IMR-90 (cell line): ENCODE measurements at regions of chr7 and their contacts with region 1.

Region 1: DNA sequence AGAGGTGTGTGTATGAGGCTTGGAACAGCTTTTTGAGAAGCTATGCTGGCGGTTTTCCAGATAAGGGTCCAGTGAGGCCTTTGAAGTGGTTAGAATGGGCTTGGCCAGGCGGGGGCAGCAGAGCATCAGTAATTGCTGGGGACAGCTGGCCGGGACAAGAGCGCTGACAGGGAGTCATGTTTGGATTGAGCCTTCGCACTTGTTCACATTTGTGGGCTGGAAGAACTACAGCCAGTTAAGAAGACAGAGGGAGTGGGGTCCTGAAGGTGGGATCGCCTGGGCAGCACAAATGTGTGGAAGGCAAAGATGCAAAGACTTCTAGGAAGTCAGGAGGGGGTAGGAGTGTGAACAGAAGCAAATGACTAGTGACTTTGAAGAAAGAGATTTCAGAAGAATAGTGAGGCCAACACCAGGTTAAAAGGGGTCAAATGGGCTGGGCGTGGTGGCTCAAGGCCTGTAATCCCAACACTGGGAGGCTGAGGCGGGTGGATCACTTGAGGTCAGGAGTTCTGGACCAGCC is 12.7 kb upstream of the SDHAF3 start:
- DNase-seq: peak; percentile 60
- ATAC-seq: peak; percentile 100
- H3K4me3 ChIP-seq: no peak overlapping the region
- H3K27ac ChIP-seq: no peak overlapping the region
- H3K4me1 ChIP-seq: no peaks in the 10 kb centered on the region
- H3K27me3 ChIP-seq: no peaks in the 10 kb centered on the region
- CTCF ChIP-seq: peak; percentile 85
- POLR2A ChIP-seq: no peak
- RAD21 ChIP-seq: peak; percentile 89

Region 2: DNA sequence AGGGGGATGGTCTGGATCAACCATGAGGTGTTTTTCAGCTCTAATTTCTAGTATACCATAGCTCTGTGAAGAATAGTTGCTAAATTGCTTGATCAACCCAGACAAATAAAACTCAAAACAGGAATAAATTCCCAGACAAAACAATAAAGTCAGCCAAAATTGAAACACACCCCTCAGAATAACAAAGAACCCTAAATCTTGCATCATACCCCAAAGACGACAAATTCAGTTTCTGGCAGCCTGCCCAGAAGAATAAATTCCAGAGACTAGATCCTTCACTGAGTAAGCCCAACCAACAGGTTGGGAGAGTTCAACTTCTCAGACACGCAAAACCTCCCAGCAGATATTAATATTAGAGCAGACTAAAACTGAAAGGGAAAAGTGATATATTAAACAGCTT is 383.9 kb before region 1 on chr7:
- CTCF ChIA-PET with region 1: no interaction called
- POLR2A ChIA-PET with region 1: no interaction called
- dilution Hi-C with region 1: no loop called
- in situ Hi-C with region 1: no loop called
- intact Hi-C with region 1: no loop called
- DNase-seq: no peak
- ATAC-seq: no peak
- H3K4me3 ChIP-seq: no peak overlapping the region
- H3K27ac ChIP-seq: no peak overlapping the region
- H3K4me1 ChIP-seq: no peaks in the 10 kb centered on the region
- H3K27me3 ChIP-seq: no peaks in the 10 kb centered on the region
- CTCF ChIP-seq: no peak
- POLR2A ChIP-seq: no peak
- RAD21 ChIP-seq: no peak

Region 3: DNA sequence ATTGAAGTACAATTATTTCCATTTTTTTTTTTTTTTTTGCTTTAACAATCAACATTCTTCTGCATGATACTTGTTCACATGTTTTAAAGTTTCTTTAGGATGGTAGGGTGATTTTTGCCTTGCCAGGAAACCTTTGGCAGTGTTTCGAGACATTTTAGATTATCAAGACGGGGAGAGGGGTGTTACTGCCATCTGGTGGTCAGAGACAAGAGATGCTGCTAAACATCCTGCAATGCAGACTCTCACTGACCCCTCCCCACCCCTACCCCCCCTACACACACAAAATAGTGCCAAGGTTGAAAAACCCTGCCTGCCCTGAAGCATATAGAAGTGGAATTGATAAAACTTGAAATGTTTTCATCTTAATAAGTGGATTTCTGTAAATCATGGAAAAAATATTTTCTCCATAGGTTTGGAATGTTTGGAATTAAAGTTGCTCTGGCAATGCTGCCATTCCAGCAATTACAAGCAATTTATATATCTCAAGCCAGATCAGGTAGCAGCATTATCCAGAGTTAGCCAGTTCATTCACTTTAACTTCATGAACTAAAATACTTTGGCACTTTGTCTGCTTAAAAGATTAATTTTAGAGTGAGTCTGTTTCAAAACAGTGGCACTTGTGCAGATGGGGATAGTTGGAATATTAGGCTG is 74.8 kb after region 1 on chr7:
- CTCF ChIA-PET with region 1: interaction called, 4 read pairs
- POLR2A ChIA-PET with region 1: no interaction called
- dilution Hi-C with region 1: no loop called
- in situ Hi-C with region 1: no loop called
- intact Hi-C with region 1: loop called (anchors 1 kb)
- DNase-seq: peak; percentile 65
- ATAC-seq: peak; percentile 89
- H3K4me3 ChIP-seq: no peak overlapping the region
- H3K27ac ChIP-seq: no peak overlapping the region
- H3K4me1 ChIP-seq: no peaks in the 10 kb centered on the region
- H3K27me3 ChIP-seq: no peaks in the 10 kb centered on the region
- CTCF ChIP-seq: peak; percentile 68
- POLR2A ChIP-seq: no peak
- RAD21 ChIP-seq: peak; percentile 67

Region 4: DNA sequence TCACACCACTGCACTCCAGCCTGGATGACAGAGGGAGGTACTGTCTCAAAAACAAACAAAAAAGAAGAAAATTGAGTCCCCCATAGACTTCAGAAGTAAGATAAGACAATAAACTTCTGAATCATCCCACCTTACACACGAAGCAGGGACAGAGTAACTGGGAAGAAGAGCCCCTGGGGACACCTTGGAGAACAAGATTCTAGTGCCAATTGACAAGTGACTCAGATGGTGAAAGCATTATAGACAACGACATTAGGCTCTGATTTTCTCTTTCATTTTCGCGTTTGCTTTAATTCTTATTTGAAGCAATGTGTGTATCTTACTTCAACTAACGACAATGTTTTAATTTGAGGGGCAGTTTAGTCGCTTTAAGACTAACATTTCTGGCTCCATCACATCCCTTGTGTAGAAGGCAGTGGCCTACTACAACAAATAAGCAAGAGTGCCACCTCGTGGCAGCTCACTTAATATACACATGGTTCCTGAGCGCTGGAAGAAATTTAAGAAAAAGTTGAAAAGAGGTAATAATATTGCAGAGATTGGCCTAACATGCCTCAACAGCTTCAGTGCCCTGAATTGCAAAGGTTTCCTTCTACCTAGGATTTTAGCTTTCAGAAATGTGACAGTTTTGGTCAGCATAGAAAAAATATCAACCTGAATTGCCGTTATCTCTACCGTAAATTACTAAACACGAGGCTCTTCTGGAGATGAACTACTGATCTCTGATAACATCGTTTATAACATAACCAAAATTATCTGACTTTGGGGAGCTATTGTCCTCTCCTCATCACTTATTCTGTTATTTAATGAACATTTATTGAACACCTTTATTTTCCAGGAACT is 730.7 kb after region 1 on chr7:
- CTCF ChIA-PET with region 1: interaction called, 6 read pairs
- POLR2A ChIA-PET with region 1: no interaction called
- dilution Hi-C with region 1: no loop called
- in situ Hi-C with region 1: loop called (anchors 5 kb)
- intact Hi-C with region 1: loop called (anchors 1 kb)
- DNase-seq: peak; percentile 63
- ATAC-seq: peak; percentile 98
- H3K4me3 ChIP-seq: no peak overlapping the region
- H3K27ac ChIP-seq: no peak overlapping the region
- H3K4me1 ChIP-seq: no peaks in the 10 kb centered on the region
- H3K27me3 ChIP-seq: peaks cover 9% of the 10 kb centered on the region
- CTCF ChIP-seq: peak; percentile 71
- POLR2A ChIP-seq: no peak
- RAD21 ChIP-seq: peak; percentile 58

Region 5: GRCh38 chr7:97845622-97846203 is 740.9 kb after region 1 on chr7:
- CTCF ChIA-PET with region 1: interaction called, 5 read pairs
- POLR2A ChIA-PET with region 1: no interaction called
- dilution Hi-C with region 1: no loop called
- in situ Hi-C with region 1: no loop called
- intact Hi-C with region 1: loop called (anchors 2 kb)
- DNase-seq: peak; percentile 15
- ATAC-seq: peak; percentile 61; the same call in 1 of the 2 replicates
- H3K4me3 ChIP-seq: no peak overlapping the region
- H3K27ac ChIP-seq: no peak overlapping the region
- H3K4me1 ChIP-seq: no peaks in the 10 kb centered on the region
- H3K27me3 ChIP-seq: 0 out of 2 replicates have a peak, but pooled peaks cover 2% of the 10 kb centered on the region
- CTCF ChIP-seq: peak; percentile 52
- POLR2A ChIP-seq: no peak
- RAD21 ChIP-seq: peak; percentile 23; the same call in 1 of the 2 replicates